Dorsolateral prefrontal cortex (tissue), 120 donors: ENCODE measurements at regions of chr5 and their contacts with region 1.

Region 1: GRCh38 chr5:154610321-154611154 is 132.5 kb upstream of the HAND1 start:
- DNase-seq: peak; percentile 28 to 79 (median 66)
- H3K4me3 ChIP-seq: peak overlapping the region in 56 of 59 donors; percentile 4 to 66 (median 42)
- H3K27ac ChIP-seq: no peak overlapping the region
- H3K27me3 ChIP-seq: peaks cover 0 to 65% (median 30%) of the 10 kb centered on the region in 45 donors
- CTCF ChIP-seq: peak; percentile 24 to 89 (median 78)

Region 2: GRCh38 chr5:154467655-154468354 is 142.7 kb before region 1 on chr5:
- intact Hi-C with region 1: loop called (anchors 2 to 5 kb)
- DNase-seq: peak; percentile 60 to 84 (median 73)
- H3K4me3 ChIP-seq: no peak overlapping the region
- H3K27ac ChIP-seq: no peak overlapping the region
- H3K27me3 ChIP-seq: peaks cover 0 to 40% (median 24%) of the 10 kb centered on the region in 45 donors
- CTCF ChIP-seq: peak; percentile 80 to 96 (median 91)

Region 3: DNA sequence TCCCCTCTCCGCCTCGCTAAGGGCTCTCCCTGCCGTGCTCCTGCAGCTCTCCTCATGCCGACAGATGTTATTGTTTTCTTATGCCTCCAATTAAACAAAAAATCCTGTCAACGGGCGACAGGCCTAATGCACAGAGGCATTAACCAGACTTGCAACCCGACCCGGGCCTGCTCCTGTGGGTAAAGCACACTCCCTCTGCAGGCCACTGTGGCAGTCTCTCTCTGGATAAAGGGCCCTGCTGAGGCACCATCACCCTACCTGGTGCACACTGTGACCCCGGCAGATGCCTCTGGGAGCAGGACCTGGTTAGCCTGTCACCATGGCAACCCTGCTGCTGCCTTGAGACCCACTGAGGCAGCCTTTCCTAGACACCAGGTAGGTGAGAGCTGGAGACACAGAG is 104.9 kb before region 1 on chr5:
- intact Hi-C with region 1: no loop called
- DNase-seq: no peak
- H3K4me3 ChIP-seq: no peak overlapping the region
- H3K27ac ChIP-seq: no peak overlapping the region
- H3K27me3 ChIP-seq: peaks cover 0 to 20% (median 0%) of the 10 kb centered on the region in 45 donors
- CTCF ChIP-seq: no peak

Region 4: GRCh38 chr5:154520861-154521453 is 89.6 kb before region 1 on chr5:
- intact Hi-C with region 1: loop called in 1 of 2 experiments (anchors 5 kb)
- DNase-seq: peak in 2 of 10 donors; percentile 14 to 49
- H3K4me3 ChIP-seq: peak overlapping the region in 20 of 59 donors; percentile 2 to 53 (median 30)
- H3K27ac ChIP-seq: no peak overlapping the region
- H3K27me3 ChIP-seq: peaks cover 0 to 36% (median 7%) of the 10 kb centered on the region in 45 donors
- CTCF ChIP-seq: peak; percentile 20 to 78 (median 63)

Region 5: DNA sequence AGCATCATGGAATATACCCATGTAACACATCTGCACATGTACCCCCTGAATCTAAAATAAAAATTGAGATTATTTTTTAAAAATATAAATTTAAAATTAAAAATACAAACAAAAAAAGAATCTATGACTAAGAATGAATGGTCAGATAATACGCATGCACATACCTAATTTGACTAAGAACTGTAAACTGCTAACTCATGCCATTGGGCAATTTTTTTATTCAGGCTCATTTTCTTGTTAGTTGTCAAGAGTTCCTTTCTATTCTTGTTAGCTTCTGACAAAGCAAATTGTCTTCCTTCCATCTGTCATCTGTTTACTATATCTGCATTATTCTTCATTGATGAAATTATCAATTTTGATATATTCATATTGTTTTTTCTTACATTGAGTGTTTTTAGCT is 63.0 kb before region 1 on chr5:
- intact Hi-C with region 1: no loop called
- DNase-seq: no peak
- H3K4me3 ChIP-seq: no peak overlapping the region
- H3K27ac ChIP-seq: no peak overlapping the region
- H3K27me3 ChIP-seq: no peaks in the 10 kb centered on the region
- CTCF ChIP-seq: no peak

Region 6: GRCh38 chr5:154627698-154628678 is 17.4 kb after region 1 on chr5:
- intact Hi-C with region 1: no loop called
- DNase-seq: no peak
- H3K4me3 ChIP-seq: no peak overlapping the region
- H3K27ac ChIP-seq: no peak overlapping the region
- H3K27me3 ChIP-seq: no peaks in the 10 kb centered on the region
- CTCF ChIP-seq: no peak